ENCODE measurements at regions of chr9 and their contacts with region 1.

Region 1: DNA sequence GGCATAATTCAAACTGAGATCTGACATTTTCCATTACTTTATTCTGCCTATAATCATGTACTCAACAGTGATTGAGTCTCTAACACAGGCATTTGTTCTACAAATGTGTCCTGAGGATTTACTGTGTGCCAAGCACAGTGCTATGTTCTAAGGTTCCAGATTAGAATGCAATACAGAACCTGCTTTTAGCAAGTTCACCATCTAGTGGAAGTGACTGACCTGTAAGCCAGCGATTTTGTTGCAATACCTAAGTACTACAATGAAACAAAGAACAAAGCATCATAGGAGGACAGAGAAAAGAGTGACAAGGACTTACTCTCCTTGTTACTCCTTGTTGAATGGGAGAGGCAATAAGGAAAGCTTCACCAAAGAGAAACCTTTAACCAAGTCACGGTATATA is 348.1 kb downstream of the ELAVL2 start:
- DNase-seq: no peak
- H3K4me3 ChIP-seq: no peak overlapping the region
- H3K27ac ChIP-seq: no peak overlapping the region
- H3K4me1 ChIP-seq: no peaks in the 10 kb centered on the region
- H3K27me3 ChIP-seq: no peaks in the 10 kb centered on the region

Region 2: DNA sequence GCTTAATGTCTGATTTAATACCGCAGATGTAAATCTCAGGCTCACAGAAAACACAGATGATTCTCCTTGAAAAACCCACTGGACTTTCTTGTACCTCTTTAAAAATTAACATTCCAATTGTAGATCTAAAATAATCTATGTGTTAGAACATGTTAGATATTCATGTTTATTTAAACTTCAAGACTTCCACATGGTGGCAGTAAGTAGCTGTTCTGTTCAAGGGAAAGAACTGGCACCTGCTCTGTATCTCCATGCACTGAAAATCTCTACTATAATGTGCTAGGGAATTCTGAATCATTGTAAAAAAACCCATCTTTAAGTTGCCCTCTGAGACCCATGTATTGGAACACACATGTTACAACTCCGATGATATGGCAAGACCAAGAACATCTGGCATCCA is 664.4 kb before region 1 on chr9:
- in situ Hi-C with region 1: loop called (anchors 10 kb)
- DNase-seq: peak; percentile 67
- H3K4me3 ChIP-seq: no peak overlapping the region
- H3K27ac ChIP-seq: no peak overlapping the region
- H3K4me1 ChIP-seq: peaks cover 16% of the 10 kb centered on the region
- H3K27me3 ChIP-seq: no peaks in the 10 kb centered on the region

Region 3: DNA sequence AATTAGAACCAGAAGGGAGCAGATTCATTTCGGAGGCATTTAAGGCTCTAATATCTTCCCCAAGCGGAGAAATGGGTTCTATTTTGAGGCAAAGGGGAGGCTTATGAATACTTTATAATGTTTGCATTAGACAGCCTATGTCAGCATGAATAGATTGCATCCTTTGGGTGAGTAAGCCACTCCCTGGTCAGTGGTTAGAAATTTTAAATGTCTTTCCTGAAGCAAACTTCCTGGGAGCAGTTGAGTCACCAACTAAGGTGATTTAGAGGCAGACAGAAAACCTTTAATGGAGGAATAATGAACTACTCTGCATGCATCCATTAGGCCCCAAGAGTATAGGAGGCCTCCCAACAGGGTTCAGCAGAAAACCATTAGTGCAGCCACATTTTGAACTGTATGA is 143.3 kb after region 1 on chr9:
- in situ Hi-C with region 1: no loop called
- DNase-seq: no peak
- H3K4me3 ChIP-seq: no peak overlapping the region
- H3K27ac ChIP-seq: no peak overlapping the region
- H3K4me1 ChIP-seq: no peaks in the 10 kb centered on the region
- H3K27me3 ChIP-seq: no peaks in the 10 kb centered on the region

Measured in GM23248 (cell line).